Mammary epithelial cell (primary cell): ENCODE measurements at regions of chr2 and their contacts with region 1.

Region 1: GRCh38 chr2:225660262-225661131 is 261.0 kb downstream of the NYAP2 start:
- DNase-seq: peak; percentile 48
- H3K4me3 ChIP-seq: no peak overlapping the region
- H3K27ac ChIP-seq: no peak overlapping the region
- H3K4me1 ChIP-seq: no peaks in the 10 kb centered on the region
- H3K27me3 ChIP-seq: no peaks in the 10 kb centered on the region
- CTCF ChIP-seq: peak; percentile 76 to 92

Region 2: DNA sequence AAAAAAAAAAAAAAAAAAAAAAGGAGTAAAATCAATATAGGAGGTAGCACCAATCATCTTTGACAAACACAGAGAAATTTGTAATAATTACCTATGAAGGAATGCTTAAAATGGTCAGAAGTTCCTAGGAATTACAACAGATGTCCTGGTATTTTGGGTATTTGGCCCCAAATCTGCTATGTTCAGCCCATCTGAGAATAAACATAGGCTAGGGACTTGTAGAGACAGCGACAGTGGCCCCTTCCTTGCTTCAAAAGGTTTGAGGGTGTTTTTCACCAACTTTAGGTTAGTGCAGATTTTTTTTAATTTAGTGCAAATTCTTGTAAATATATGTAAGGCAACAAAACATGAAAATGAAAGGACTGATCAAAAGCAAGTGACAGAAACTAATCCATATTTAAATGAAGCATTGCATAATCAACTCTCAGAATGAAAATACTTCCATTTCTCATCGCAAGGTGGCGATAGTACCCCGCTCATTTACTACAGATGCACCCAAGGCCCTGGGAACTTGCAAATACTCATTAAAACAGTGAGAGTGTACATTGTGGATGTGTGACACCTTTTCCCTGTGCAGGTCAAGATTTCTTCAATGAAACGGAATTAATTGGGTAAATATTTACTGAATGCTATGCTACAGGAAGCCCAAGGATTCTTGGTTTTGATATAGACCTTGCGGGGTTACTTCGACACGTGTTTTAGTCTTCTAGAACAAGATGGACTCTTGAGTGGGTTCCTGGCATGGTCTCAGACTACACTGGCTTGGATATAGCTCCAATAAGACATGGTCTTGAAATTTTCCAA is 1303.2 kb before region 1 on chr2:
- CTCF ChIA-PET with region 1: no interaction called
- dilution Hi-C with region 1: no loop called
- in situ Hi-C with region 1: loop called in 1 of 2 experiments (anchors 25 kb)
- intact Hi-C with region 1: loop called (anchors 1 kb)
- DNase-seq: peak; percentile 41
- H3K4me3 ChIP-seq: no peak overlapping the region
- H3K27ac ChIP-seq: no peak overlapping the region
- H3K4me1 ChIP-seq: peaks cover 15% of the 10 kb centered on the region
- H3K27me3 ChIP-seq: no peaks in the 10 kb centered on the region
- CTCF ChIP-seq: peak; percentile 72 to 80

Region 3: GRCh38 chr2:225122583-225123486 is 537.7 kb before region 1 on chr2:
- CTCF ChIA-PET with region 1: interaction called, 4 read pairs
- dilution Hi-C with region 1: no loop called
- in situ Hi-C with region 1: loop called (anchors 10 to 25 kb)
- intact Hi-C with region 1: loop called (anchors 1 kb)
- DNase-seq: no peak
- H3K4me3 ChIP-seq: no peak overlapping the region
- H3K27ac ChIP-seq: no peak overlapping the region
- H3K4me1 ChIP-seq: peaks cover 10% of the 10 kb centered on the region
- H3K27me3 ChIP-seq: no peaks in the 10 kb centered on the region
- CTCF ChIP-seq: peak; percentile 56 to 58

Region 4: DNA sequence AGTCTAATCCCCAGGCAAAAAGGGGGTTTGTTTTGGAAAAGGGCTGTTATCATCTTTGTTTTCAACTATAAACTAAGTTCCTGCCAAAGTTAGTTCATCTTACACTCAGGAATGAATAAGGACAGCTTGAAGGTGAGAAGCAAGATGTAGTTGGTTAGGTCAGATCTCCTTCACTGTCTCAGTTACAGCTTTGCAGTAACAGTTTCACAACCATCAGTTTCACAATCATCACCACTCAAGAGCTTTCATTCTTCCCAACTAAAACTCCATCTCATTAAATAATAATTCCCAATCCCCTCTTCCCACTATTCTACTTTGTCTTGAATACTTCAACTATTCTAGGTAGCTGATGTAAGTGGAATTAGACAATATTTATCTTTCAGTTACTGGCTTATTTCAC is 60.1 kb before region 1 on chr2:
- CTCF ChIA-PET with region 1: no interaction called
- dilution Hi-C with region 1: no loop called
- in situ Hi-C with region 1: no loop called
- intact Hi-C with region 1: no loop called
- DNase-seq: no peak
- H3K4me3 ChIP-seq: no peak overlapping the region
- H3K27ac ChIP-seq: no peak overlapping the region
- H3K4me1 ChIP-seq: no peaks in the 10 kb centered on the region
- H3K27me3 ChIP-seq: no peaks in the 10 kb centered on the region
- CTCF ChIP-seq: no peak

Region 5: GRCh38 chr2:225694664-225695063 is 34.2 kb after region 1 on chr2:
- CTCF ChIA-PET with region 1: no interaction called
- dilution Hi-C with region 1: no loop called
- in situ Hi-C with region 1: no loop called
- intact Hi-C with region 1: no loop called
- DNase-seq: no peak
- H3K4me3 ChIP-seq: no peak overlapping the region
- H3K27ac ChIP-seq: no peak overlapping the region
- H3K4me1 ChIP-seq: no peaks in the 10 kb centered on the region
- H3K27me3 ChIP-seq: no peaks in the 10 kb centered on the region
- CTCF ChIP-seq: no peak

Region 6: DNA sequence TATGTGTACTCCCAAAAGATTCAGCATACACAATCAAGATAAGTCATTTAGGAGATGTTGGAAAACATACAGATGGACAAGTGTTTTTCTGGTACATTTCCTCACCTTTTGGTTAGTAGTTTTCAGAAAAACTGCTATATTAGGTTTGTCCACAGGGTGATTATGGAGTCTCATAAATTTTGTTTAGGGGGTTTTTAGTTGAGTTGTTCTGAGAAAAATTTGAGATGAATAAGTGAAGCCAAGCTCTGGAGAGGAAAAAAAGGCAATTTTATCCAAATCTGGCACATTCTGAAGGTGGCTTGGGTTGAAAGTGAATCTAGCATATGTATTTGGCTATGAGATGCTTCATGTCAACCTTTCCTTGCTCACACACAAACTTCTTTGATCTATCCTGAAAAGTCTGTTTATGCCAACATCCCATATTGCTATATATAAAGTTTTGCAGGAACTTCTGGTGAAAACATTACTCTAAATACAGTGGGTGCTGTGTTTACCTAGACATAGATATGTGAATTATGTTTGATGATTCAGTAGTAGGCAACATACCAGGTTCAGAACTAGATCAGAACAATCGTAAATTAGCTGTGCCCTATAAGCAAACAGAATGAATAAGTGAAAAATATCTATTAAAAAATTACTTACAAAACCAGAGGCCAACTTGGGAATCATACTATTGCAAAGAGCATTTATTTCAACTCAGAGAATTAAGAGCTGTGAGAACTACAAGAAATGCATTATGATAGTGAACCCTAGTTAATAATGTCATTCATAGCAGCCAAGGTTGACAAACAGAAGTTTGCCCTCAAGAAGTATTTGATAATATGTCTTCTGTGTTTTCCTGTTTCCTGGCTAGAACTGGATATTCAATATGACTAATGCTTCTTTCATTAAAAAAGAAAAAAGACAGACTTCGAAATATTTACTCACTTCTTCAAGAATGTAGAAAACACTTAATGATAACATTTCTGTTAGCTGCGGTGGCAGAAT is 587.1 kb after region 1 on chr2:
- CTCF ChIA-PET with region 1: interaction called, 23 read pairs
- dilution Hi-C with region 1: no loop called
- in situ Hi-C with region 1: no loop called
- intact Hi-C with region 1: no loop called
- DNase-seq: peak; percentile 48
- H3K4me3 ChIP-seq: no peak overlapping the region
- H3K27ac ChIP-seq: peak overlapping the region; percentile 7
- H3K4me1 ChIP-seq: peaks cover 10% of the 10 kb centered on the region
- H3K27me3 ChIP-seq: no peaks in the 10 kb centered on the region
- CTCF ChIP-seq: no peak

Region 7: GRCh38 chr2:227052879-227053278 is 1392.4 kb after region 1 on chr2:
- CTCF ChIA-PET with region 1: interaction called, 10 read pairs
- dilution Hi-C with region 1: no loop called
- in situ Hi-C with region 1: no loop called
- intact Hi-C with region 1: no loop called
- DNase-seq: no peak
- H3K4me3 ChIP-seq: no peak overlapping the region
- H3K27ac ChIP-seq: no peak overlapping the region
- H3K4me1 ChIP-seq: no peaks in the 10 kb centered on the region
- H3K27me3 ChIP-seq: no peaks in the 10 kb centered on the region
- CTCF ChIP-seq: no peak

Region 8: GRCh38 chr2:227228061-227228667 is 1567.7 kb after region 1 on chr2:
- CTCF ChIA-PET with region 1: no interaction called
- dilution Hi-C with region 1: no loop called
- in situ Hi-C with region 1: no loop called
- intact Hi-C with region 1: loop called (anchors 10 kb)
- DNase-seq: peak; percentile 59
- H3K4me3 ChIP-seq: peak overlapping the region in 1 of 3 experiments; percentile 22
- H3K27ac ChIP-seq: no peak overlapping the region
- H3K4me1 ChIP-seq: peaks cover 11% of the 10 kb centered on the region
- H3K27me3 ChIP-seq: no peaks in the 10 kb centered on the region
- CTCF ChIP-seq: no peak